ENCODE measurements at regions of chrX and their contacts with region 1.

Region 1: GRCh38 chrX:140065961-140066662 is 100.8 kb upstream of the CXorf66 start:
- DNase-seq: no peak
- ATAC-seq: no peak
- H3K4me3 ChIP-seq: no peak overlapping the region
- H3K27ac ChIP-seq: no peak overlapping the region
- H3K4me1 ChIP-seq: no peaks in the 10 kb centered on the region
- H3K27me3 ChIP-seq: no peaks in the 10 kb centered on the region

Region 2: DNA sequence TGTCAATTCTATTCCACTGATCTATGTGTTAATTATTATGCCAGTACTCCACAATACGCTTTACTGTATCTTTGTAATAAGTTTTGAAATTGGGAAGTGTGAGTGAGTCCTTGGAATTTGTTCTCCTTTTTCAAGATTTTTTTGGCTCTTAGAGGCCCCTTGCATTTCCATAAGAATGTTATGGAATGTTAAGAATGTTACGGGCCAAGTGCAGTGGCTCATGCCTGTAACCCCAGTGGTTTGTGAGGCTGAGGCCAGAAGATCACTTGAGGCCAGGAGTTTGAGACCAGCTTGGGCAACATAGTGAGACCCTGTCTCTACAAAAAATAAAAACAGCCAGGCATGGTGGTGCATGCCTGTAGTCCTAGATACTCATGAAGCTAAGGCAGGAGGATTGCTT is 66.8 kb after region 1 on chrX:
- intact Hi-C with region 1: loop called in 1 of 4 experiments (anchors 10 kb)
- DNase-seq: no peak
- ATAC-seq: no peak
- H3K4me3 ChIP-seq: no peak overlapping the region
- H3K27ac ChIP-seq: no peak overlapping the region
- H3K4me1 ChIP-seq: no peaks in the 10 kb centered on the region
- H3K27me3 ChIP-seq: no peaks in the 10 kb centered on the region

Region 3: GRCh38 chrX:140664939-140665338 is 598.8 kb after region 1 on chrX:
- intact Hi-C with region 1: loop called in 1 of 4 experiments (anchors 10 kb)
- DNase-seq: no peak
- ATAC-seq: no peak
- H3K4me3 ChIP-seq: no peak overlapping the region
- H3K27ac ChIP-seq: no peak overlapping the region
- H3K4me1 ChIP-seq: no peaks in the 10 kb centered on the region
- H3K27me3 ChIP-seq: no peaks in the 10 kb centered on the region